Gastrocnemius medialis (tissue), 4 donors: ENCODE measurements at regions of chr18 and their contacts with region 1.

Region 1: GRCh38 chr18:6659963-6660725 is 69.4 kb upstream of the ARHGAP28 start:
- DNase-seq: peak; percentile 34 to 54
- ATAC-seq: peak; percentile 97 to 99
- H3K4me3 ChIP-seq: no peak overlapping the region
- H3K27ac ChIP-seq: peak overlapping the region in 2 of 4 donors; percentile 35 to 44
- H3K4me1 ChIP-seq: peaks cover 10 to 18% of the 10 kb centered on the region in 2 donors
- H3K27me3 ChIP-seq: no peaks in the 10 kb centered on the region
- CTCF ChIP-seq: no peak
- POLR2A ChIP-seq: no peak

Region 2: GRCh38 chr18:6327895-6328620 is 332.1 kb before region 1 on chr18:
- in situ Hi-C with region 1: no loop called
- intact Hi-C with region 1: no loop called
- DNase-seq: no peak
- ATAC-seq: no peak
- H3K4me3 ChIP-seq: no peak overlapping the region
- H3K27ac ChIP-seq: no peak overlapping the region
- H3K4me1 ChIP-seq: no peaks in the 10 kb centered on the region
- H3K27me3 ChIP-seq: no peaks in the 10 kb centered on the region
- CTCF ChIP-seq: no peak
- POLR2A ChIP-seq: no peak

Region 3: GRCh38 chr18:6605115-6605869 is 54.9 kb before region 1 on chr18:
- in situ Hi-C with region 1: no loop called
- intact Hi-C with region 1: loop called (anchors 10 kb)
- DNase-seq: peak; percentile 19 to 21
- ATAC-seq: peak; percentile 70 to 92
- H3K4me3 ChIP-seq: no peak overlapping the region
- H3K27ac ChIP-seq: peak overlapping the region in 1 of 4 donors; percentile 43
- H3K4me1 ChIP-seq: peaks cover 0 to 5% of the 10 kb centered on the region in 2 donors
- H3K27me3 ChIP-seq: no peaks in the 10 kb centered on the region
- CTCF ChIP-seq: no peak
- POLR2A ChIP-seq: no peak

Region 4: DNA sequence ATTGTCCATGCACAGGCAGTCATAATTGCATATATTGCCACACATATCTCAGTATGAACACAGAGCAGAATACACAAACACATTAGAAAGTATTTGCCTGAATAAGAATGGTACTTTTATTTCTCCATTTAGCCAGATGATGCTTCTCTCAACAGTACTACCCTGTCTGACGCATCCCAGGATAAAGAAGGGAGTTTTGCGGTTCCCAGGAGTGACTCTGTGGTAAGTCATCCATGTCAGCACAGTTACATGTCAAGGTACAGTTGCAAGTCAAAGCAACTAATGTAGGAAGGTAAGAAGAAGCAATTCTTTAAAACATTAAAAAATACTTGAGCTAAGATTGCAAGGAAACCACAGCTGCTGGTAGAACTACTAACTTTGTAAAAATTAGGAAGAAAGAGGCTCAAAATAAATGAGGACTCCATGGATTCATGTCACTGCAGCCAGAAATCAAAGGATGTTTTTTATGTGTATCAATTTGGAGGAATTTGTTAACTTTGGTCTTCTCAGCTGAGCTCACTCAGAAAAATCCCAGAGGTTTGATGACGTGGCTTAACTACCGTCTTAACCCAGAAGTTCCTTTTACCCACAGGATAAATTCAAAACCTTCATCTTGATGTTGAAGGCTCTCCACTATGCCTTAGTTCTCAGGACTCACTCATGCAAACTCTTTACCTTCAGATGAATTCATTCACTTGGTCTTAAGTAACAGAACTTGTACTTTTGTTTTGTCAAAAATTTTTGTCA is 199.7 kb after region 1 on chr18:
- in situ Hi-C with region 1: no loop called
- intact Hi-C with region 1: loop called (anchors 10 kb)
- DNase-seq: no peak
- ATAC-seq: no peak
- H3K4me3 ChIP-seq: no peak overlapping the region
- H3K27ac ChIP-seq: no peak overlapping the region
- H3K4me1 ChIP-seq: no peaks in the 10 kb centered on the region
- H3K27me3 ChIP-seq: no peaks in the 10 kb centered on the region
- CTCF ChIP-seq: no peak
- POLR2A ChIP-seq: no peak